B cell (primary cell): ENCODE measurements at regions of chr17 and their contacts with region 1.

Region 1: DNA sequence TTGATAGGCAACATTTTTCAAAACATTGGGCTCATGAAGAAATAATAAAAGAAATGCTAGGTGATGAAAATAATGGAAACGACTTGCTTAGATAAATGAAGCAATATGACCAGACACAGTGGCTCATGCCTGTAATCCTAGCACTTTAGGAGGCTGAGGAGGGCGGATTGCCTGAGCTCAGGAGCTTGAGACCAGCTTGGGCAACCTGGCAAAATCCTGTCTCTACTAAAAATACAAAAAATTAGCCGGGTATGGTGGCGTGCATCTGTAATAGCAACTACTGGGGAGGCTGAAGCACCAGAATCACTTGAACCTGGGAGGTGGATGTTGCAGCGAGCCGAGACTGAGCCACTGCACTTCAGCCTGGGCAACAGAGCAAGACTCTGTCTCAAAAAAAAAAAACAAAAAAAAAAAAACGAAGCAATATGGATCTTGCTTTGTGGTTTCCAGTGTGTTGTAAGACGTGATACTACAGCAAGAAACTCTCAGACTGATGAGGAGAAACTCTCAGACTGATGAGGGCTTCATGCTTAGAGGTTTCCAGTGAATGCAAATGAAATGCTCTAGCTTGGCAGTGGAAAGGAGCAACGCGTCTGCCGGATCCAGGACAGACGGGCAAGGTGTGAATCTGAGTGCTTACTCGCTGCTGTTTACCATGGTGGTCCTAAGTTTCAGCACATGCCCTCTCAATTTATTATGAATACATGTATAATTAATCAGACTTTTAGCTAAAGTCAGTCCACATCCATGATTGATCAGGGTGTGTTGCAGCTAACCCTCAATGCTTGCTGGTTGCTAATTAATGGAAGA is 11.5 kb upstream of the IGF2BP1 start:
- DNase-seq: no peak
- ATAC-seq: no peak
- H3K4me3 ChIP-seq: no peak overlapping the region
- H3K4me3 Mint-ChIP-seq: no peak overlapping the region
- H3K27ac ChIP-seq: no peak overlapping the region
- H3K27ac Mint-ChIP-seq: no peak overlapping the region
- H3K4me1 ChIP-seq: no peaks in the 10 kb centered on the region
- H3K4me1 Mint-ChIP-seq: no peaks in the 10 kb centered on the region
- H3K27me3 ChIP-seq: peaks cover 0 to 15% (median 10%) of the 10 kb centered on the region in 4 experiments
- H3K27me3 Mint-ChIP-seq: peaks cover 36% of the 10 kb centered on the region
- CTCF ChIP-seq: no peak

Region 2: DNA sequence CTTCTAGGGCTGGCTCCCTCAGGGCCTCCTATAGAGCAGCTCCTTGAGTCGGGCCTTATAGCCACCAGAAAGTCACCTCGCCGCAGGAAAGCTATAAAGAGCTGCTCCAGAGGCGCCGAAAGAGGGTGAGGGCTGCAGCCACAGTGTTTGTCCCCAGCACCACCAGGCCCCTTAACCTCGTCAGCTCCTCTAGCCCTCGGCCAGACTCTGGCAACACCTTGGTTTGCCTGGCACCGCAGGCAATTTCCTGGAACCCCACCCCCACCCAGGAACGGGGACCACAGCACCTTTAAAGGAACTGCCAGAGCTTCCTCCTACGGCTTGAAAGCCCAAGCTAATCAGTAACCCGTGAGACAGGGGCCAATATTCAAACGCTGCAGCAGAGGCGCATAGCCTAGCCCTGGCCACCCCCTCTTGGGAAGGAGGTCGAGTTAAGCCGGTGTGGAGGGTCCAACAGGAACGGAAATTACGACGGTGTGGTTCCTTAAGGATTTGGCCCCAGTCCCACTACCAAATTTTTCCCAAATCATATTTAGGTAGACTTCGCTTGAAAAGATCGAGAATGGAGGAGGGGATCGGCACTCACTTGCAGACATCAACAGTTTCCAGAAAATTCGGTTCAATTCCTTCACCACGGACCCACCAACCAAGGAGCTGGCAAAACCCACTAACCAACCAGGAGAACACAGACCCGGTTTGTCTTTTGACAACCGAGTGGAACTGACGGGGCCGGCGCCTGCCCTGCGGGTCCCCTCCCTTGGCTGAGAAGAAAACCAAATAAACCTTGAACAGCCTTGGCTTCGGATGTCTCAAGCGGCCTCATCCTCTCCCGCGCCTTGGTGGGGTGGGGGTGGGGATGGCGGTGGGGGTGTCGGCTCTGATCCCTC is 383.9 kb before region 1 on chr17:
- CTCF ChIA-PET with region 1: no interaction called
- POLR2A ChIA-PET with region 1: interaction called, 12 read pairs
- intact Hi-C with region 1: no loop called
- DNase-seq: no peak
- ATAC-seq: no peak
- H3K4me3 ChIP-seq: no peak overlapping the region
- H3K4me3 Mint-ChIP-seq: no peak overlapping the region
- H3K27ac ChIP-seq: no peak overlapping the region
- H3K27ac Mint-ChIP-seq: no peak overlapping the region
- H3K4me1 ChIP-seq: peaks cover 24 to 31% of the 10 kb centered on the region in 2 donors
- H3K4me1 Mint-ChIP-seq: peaks cover 25% of the 10 kb centered on the region
- H3K27me3 ChIP-seq: peaks cover under 1 to 98% (median 76%) of the 10 kb centered on the region in 4 experiments
- H3K27me3 Mint-ChIP-seq: peaks cover 80% of the 10 kb centered on the region
- CTCF ChIP-seq: no peak

Region 3: DNA sequence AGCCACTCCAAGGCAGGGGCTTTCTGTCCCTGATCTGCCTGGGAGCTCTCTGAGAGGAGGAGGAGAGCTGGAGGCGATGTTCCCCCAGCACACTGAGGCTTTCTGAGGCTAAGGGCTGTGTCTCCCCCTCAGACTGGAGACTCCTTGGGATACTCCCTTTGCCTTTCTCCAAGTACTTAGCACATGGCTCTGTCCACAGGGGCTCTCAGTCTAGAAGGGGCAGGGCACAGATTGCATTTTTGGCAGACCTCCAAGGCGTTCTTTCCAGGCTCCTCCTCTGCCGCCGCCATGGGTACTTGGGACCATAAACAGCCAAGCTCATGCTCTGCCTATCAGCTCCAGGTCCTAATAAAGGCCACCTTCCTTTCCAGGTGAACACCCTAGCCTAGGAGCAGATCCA is 15.4 kb before region 1 on chr17:
- CTCF ChIA-PET with region 1: no interaction called
- POLR2A ChIA-PET with region 1: no interaction called
- intact Hi-C with region 1: no loop called
- DNase-seq: no peak
- ATAC-seq: no peak
- H3K4me3 ChIP-seq: no peak overlapping the region
- H3K4me3 Mint-ChIP-seq: no peak overlapping the region
- H3K27ac ChIP-seq: no peak overlapping the region
- H3K27ac Mint-ChIP-seq: no peak overlapping the region
- H3K4me1 ChIP-seq: no peaks in the 10 kb centered on the region
- H3K4me1 Mint-ChIP-seq: no peaks in the 10 kb centered on the region
- H3K27me3 ChIP-seq: peaks cover 0 to 8% (median 1%) of the 10 kb centered on the region in 4 experiments
- H3K27me3 Mint-ChIP-seq: peaks cover 47% of the 10 kb centered on the region
- CTCF ChIP-seq: no peak

Region 4: DNA sequence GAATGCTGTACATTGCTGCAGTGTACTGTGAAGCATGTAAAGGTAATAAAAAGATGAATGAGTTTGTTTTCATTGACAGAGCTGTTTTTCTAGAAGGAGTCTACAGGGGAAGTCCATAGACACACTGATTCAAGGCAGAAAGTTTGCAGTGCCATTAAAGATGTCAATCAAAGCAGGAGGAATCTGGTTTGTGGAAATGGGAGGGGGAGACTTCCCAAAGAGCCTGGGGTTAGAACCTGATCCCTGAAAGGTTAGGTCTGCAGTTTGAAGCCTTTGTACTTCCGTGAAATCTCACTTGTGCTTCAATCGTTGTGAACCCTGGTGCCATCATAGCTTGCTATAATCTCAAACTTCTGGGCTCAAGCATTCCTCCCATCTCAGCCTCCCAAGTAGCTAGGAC is 1445.6 kb after region 1 on chr17:
- CTCF ChIA-PET with region 1: no interaction called
- POLR2A ChIA-PET with region 1: interaction called, 13 read pairs
- intact Hi-C with region 1: no loop called
- DNase-seq: no peak
- ATAC-seq: no peak
- H3K4me3 ChIP-seq: no peak overlapping the region
- H3K4me3 Mint-ChIP-seq: no peak overlapping the region
- H3K27ac ChIP-seq: no peak overlapping the region
- H3K27ac Mint-ChIP-seq: no peak overlapping the region
- H3K4me1 ChIP-seq: peaks cover 13 to 17% of the 10 kb centered on the region in 2 donors
- H3K4me1 Mint-ChIP-seq: peaks cover 26% of the 10 kb centered on the region
- H3K27me3 ChIP-seq: no peaks in the 10 kb centered on the region
- H3K27me3 Mint-ChIP-seq: no peaks in the 10 kb centered on the region
- CTCF ChIP-seq: no peak